Natural killer cell (primary cell): ENCODE measurements at regions of chr3 and their contacts with region 1.

Region 1: DNA sequence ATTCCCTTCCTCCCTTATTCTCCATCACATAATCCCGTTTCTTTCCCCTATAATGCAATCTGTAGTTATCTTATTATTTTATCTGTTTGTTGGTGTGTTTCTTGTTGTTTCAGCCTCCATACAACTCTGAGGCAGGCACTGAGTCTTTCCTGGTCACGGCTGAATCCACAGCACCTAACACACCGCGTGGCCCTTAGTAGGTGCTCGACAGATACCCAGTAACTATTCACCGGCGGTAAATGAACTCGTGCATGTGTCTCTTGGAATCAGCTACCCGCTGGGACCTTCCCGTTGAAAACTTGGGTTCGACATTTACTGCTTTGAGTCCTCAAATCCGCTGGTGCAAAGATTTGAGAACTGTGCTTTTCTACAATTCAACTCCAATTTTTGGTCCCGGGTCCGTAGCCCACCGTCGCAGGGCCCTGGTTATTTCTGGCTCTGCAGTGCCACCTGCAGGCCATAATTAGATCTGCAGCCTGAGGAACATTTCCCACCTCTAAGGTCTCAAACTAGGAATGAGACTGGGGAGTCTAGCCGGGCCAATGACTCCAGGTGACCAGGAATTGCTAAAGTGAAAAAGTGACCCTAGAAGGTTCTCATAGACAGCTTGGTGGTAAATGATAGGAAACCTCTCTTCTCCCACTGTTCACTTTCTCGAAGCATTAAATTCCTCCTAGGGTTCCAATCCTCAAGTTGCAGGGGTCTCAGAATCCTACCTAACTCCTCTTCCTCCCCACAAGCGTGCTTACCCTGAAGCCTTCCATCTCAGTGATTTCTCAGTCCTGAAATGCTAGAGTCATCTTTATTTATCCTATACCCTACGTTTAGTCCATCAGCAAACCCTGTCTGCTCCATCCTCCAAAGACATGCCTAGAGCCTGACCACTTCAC is 40.0 kb upstream of the TRH start:
- DNase-seq: peak; percentile 27 to 74
- ATAC-seq: peak; percentile 65 to 69 (median 66)
- H3K4me3 ChIP-seq: no peak overlapping the region
- H3K4me3 Mint-ChIP-seq: no peak overlapping the region
- H3K27ac ChIP-seq: no peak overlapping the region
- H3K27ac Mint-ChIP-seq: no peak overlapping the region
- H3K4me1 ChIP-seq: peaks cover 8% of the 10 kb centered on the region
- H3K4me1 Mint-ChIP-seq: peaks cover 11 to 17% of the 10 kb centered on the region in 2 donors
- H3K27me3 ChIP-seq: no peaks in the 10 kb centered on the region
- H3K27me3 Mint-ChIP-seq: peaks cover 3 to 8% of the 10 kb centered on the region in 2 donors
- CTCF ChIP-seq: peak; percentile 97

Region 2: GRCh38 chr3:129399145-129399894 is 535.2 kb before region 1 on chr3:
- intact Hi-C with region 1: loop called (anchors 5 kb)
- DNase-seq: peak; percentile 53 to 95
- ATAC-seq: peak; percentile 89 to 91 (median 89)
- H3K4me3 ChIP-seq: peak overlapping the region; percentile 96
- H3K4me3 Mint-ChIP-seq: peak overlapping the region; percentile 97
- H3K27ac ChIP-seq: peak overlapping the region; percentile 81
- H3K27ac Mint-ChIP-seq: peak overlapping the region; percentile 93 to 98
- H3K4me1 ChIP-seq: peaks cover 18% of the 10 kb centered on the region
- H3K4me1 Mint-ChIP-seq: peaks cover 25 to 50% of the 10 kb centered on the region in 2 donors
- H3K27me3 ChIP-seq: no peaks in the 10 kb centered on the region
- H3K27me3 Mint-ChIP-seq: no peaks in the 10 kb centered on the region
- CTCF ChIP-seq: peak; percentile 91

Region 3: DNA sequence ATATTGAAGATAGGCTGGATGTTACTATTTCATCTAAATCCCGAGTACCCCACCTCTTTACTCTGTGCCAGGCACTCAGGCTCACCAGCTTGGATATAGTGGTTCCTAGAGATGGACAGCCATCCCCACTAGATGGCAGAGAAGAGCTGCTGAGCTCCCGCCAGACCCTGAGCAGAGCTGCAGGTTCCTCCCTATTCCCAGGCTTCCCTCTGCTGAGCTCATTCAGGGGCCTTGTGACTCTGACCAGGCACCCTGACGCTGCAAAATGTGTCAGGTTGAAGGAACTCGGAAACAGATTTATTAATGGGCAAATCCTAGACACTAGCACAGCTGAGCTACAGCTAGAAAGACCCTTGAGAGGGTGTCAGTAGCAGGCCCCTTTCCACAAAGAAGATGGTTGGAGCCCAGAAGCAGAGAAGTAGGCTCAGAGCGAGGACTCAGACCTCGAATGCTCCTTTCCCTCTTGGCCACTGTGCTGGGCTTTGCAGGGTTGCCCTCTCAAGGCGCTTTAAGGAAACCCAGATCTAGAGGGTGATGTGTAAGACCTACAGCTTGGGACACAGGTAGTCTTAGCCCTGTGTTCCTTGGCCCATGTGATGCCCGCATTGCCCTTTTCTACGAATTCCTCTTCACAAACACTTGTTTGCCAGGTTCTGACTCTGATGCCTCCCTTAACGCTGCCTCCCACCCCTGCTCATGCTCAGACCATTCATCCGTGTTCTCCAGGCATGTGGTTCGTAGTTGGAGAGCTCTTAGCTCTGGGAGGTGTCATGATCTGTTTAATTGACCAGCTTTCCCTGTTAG is 444.0 kb before region 1 on chr3:
- intact Hi-C with region 1: loop called (anchors 1 kb)
- DNase-seq: peak; percentile 46 to 81
- ATAC-seq: peak; percentile 87 to 100 (median 99)
- H3K4me3 ChIP-seq: no peak overlapping the region
- H3K4me3 Mint-ChIP-seq: no peak overlapping the region
- H3K27ac ChIP-seq: no peak overlapping the region
- H3K27ac Mint-ChIP-seq: no peak overlapping the region
- H3K4me1 ChIP-seq: peaks cover 5% of the 10 kb centered on the region
- H3K4me1 Mint-ChIP-seq: peaks cover 0 to 9% of the 10 kb centered on the region in 2 donors
- H3K27me3 ChIP-seq: no peaks in the 10 kb centered on the region
- H3K27me3 Mint-ChIP-seq: no peaks in the 10 kb centered on the region
- CTCF ChIP-seq: peak; percentile 94

Region 4: DNA sequence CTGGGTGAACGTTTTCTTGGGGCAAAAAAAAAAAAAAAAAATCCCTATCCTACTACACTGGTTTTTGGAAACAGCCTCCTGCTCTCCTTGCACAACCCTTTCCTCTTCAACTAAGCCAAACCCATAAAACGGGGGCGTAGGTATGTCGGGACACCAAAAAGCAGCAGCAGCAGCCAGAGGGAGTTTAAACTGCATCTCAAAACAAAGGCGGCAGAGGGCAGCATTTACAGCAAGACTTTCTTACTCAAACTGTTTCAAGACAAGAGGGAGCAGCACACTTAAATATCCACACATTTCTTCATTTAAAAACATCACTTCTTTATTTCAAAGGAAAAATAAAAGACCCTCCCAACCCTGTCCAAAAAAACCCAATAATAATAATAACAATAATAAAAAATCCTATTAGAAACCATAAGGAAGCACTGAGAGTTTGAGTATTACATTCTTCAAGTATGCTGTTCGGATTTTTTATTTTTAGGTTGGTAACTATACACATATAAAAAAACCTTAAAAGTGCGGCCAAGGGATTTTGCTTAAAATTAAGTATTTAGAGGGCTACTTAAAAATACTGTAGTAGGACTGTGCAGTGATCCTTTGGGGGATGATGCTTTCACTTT is 284.1 kb before region 1 on chr3:
- intact Hi-C with region 1: loop called (anchors 1 kb)
- DNase-seq: peak; percentile 36 to 71
- ATAC-seq: peak in 1 of 3 donors; percentile 61
- H3K4me3 ChIP-seq: no peak overlapping the region
- H3K4me3 Mint-ChIP-seq: no peak overlapping the region
- H3K27ac ChIP-seq: no peak overlapping the region
- H3K27ac Mint-ChIP-seq: no peak overlapping the region
- H3K4me1 ChIP-seq: no peaks in the 10 kb centered on the region
- H3K4me1 Mint-ChIP-seq: peaks cover 5 to 6% of the 10 kb centered on the region in 2 donors
- H3K27me3 ChIP-seq: no peaks in the 10 kb centered on the region
- H3K27me3 Mint-ChIP-seq: no peaks in the 10 kb centered on the region
- CTCF ChIP-seq: peak; percentile 72